Natural killer cell (primary cell): ENCODE measurements at regions of chr17 and their contacts with region 1.

Region 1: DNA sequence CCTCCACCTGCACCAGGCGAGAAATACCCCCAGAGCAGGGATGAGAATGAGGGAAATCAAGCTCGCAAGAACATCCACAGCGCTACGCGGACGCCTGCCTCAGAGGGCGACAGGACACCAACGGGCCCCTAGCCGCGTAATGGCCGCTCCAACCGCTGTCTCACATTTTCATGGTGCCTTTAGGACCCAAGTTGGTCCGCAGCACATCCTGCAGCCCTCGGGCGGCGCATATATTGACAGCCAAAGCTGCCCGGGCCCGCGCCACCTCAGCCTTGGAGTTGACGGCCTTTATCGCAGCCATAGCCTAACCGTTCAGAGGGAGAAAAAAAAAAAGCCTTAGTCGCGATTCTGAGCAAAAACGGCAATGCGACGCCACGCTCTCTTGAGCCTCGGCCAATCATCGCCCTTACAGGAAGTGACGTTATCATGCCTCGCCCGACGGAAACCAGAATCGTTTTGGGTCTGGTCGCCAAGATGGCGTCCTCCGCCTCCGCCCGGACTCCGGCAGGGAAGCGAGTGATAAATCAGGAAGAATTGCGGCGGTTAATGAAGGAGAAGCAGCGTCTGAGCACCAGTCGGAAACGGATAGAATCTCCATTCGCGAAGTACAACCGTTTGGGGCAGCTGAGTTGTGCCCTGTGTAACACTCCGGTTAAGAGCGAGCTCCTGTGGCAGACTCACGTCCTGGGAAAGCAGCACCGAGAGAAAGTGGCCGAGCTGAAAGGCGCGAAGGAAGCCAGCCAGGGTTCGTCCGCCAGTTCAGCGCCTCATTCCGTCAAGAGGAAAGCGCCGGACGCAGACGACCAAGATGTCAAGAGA is at the starts of genes CCT6B and ZNF830:
- DNase-seq: peak; percentile 89 to 97
- ATAC-seq: peak; percentile 92 to 94 (median 93)
- H3K4me3 ChIP-seq: peak within 1 kb of the TSS; percentile 95
- H3K4me3 Mint-ChIP-seq: peak within 1 kb of the TSS; percentile 100
- H3K27ac ChIP-seq: peak within 1 kb of the TSS; percentile 97
- H3K27ac Mint-ChIP-seq: peak within 1 kb of the TSS; percentile 99 to 100
- H3K4me1 ChIP-seq: peaks cover 15% of the 10 kb centered on the region
- H3K4me1 Mint-ChIP-seq: peaks cover 28 to 32% of the 10 kb centered on the region in 2 donors
- H3K27me3 ChIP-seq: no peaks in the 10 kb centered on the region
- H3K27me3 Mint-ChIP-seq: peaks cover 12 to 18% of the 10 kb centered on the region in 2 donors
- CTCF ChIP-seq: no peak
- total RNA-seq, gene CCT6B: 4.1 to 4.7 (median 4.3) TPM
- total RNA-seq, gene ZNF830: 33.2 to 44.4 (median 34.3) TPM

Region 2: DNA sequence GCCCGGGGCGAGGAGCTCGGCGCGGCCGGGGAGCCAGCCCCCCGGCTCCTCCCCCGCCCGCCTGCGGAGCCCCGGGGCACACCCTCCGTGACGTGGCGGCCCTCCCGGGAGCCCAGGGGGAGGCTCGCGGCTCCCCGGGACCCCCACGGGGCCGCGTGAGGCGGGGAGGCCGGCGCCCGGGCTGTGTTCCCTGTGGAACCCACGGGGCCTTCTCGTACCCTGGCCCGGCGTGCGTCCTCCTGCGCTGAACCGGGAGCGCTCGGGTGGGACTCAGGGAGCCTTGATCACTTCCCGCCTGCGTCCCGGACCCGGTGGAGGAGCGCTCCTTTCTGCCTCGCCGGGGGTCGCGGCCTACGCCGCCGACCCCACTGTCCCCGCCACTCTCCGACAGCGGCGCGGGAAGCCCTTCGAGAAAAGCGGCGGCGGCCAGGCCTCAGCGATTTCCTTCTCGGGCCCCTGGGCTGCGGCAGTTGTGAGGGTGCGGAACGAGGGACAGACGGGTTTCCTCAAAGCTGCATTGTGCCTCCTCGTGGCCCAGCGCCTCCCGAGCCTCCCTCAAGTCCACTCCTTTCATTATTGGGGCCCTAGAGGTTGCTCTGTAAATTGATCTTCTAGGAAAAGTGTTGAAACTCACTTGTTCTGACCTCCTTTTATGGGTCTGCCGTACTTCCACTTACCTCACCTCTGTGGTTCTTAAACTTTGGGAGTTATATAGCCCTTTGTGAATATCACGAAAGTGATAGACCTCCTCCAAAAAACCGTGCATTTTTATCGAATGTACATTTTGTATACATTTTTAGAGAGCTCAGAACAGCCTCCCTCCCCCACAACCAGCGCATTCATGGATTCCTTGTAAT is 19.6 kb after region 1 on chr17:
- intact Hi-C with region 1: loop called (anchors 1 kb)
- DNase-seq: peak; percentile 85 to 88
- ATAC-seq: peak; percentile 86 to 92 (median 88)
- H3K4me3 ChIP-seq: peak overlapping the region; percentile 92
- H3K4me3 Mint-ChIP-seq: peak overlapping the region; percentile 93
- H3K27ac ChIP-seq: peak overlapping the region; percentile 99
- H3K27ac Mint-ChIP-seq: peak overlapping the region; percentile 93 to 97
- H3K4me1 ChIP-seq: peaks cover 10% of the 10 kb centered on the region
- H3K4me1 Mint-ChIP-seq: peaks cover 38 to 42% of the 10 kb centered on the region in 2 donors
- H3K27me3 ChIP-seq: no peaks in the 10 kb centered on the region
- H3K27me3 Mint-ChIP-seq: no peaks in the 10 kb centered on the region
- CTCF ChIP-seq: no peak

Region 3: DNA sequence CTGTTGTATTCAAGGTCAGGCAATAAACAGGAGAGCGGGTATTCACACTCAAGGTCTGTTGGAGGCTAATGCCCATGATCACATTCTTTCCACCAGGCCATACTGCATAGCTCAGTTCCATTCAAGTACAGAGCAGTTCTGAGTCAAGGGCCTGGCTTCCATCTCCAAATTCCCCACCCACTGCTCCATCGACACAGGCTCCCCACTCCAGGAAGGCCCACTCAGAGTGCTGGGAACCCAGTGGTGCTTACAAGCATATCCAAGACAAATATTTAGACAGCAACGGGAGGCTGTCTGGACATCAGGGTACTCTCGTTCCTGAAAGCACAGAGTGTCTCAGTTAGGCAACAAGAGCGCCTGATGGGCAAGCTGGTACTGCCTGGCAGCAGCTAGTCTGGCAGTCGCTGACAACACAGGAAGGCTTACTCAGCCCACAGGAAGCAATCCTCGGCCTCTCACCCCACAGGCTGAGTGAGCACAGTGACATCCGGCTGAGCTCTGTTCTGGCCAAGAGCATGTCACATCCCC is 61.3 kb after region 1 on chr17:
- intact Hi-C with region 1: no loop called
- DNase-seq: peak; percentile 74 to 85
- ATAC-seq: peak; percentile 97 to 99 (median 99)
- H3K4me3 ChIP-seq: no peak overlapping the region
- H3K4me3 Mint-ChIP-seq: peak overlapping the region; percentile 75
- H3K27ac ChIP-seq: peak overlapping the region; percentile 90
- H3K27ac Mint-ChIP-seq: peak overlapping the region; percentile 99
- H3K4me1 ChIP-seq: peaks cover 25% of the 10 kb centered on the region
- H3K4me1 Mint-ChIP-seq: peaks cover 31 to 38% of the 10 kb centered on the region in 2 donors
- H3K27me3 ChIP-seq: no peaks in the 10 kb centered on the region
- H3K27me3 Mint-ChIP-seq: no peaks in the 10 kb centered on the region
- CTCF ChIP-seq: no peak

Region 4: GRCh38 chr17:35117984-35118383 is 156.7 kb after region 1 on chr17:
- intact Hi-C with region 1: no loop called
- DNase-seq: peak in 1 of 2 donors; percentile 59
- ATAC-seq: peak in 1 of 3 donors; percentile 34
- H3K4me3 ChIP-seq: no peak overlapping the region
- H3K4me3 Mint-ChIP-seq: peak overlapping the region; percentile 79
- H3K27ac ChIP-seq: no peak overlapping the region
- H3K27ac Mint-ChIP-seq: peak overlapping the region; percentile 83 to 94
- H3K4me1 ChIP-seq: peaks cover 29% of the 10 kb centered on the region
- H3K4me1 Mint-ChIP-seq: peaks cover 41 to 43% of the 10 kb centered on the region in 2 donors
- H3K27me3 ChIP-seq: no peaks in the 10 kb centered on the region
- H3K27me3 Mint-ChIP-seq: no peaks in the 10 kb centered on the region
- CTCF ChIP-seq: no peak